ENCODE measurements at regions of chr17 and their contacts with region 1.

Region 1: DNA sequence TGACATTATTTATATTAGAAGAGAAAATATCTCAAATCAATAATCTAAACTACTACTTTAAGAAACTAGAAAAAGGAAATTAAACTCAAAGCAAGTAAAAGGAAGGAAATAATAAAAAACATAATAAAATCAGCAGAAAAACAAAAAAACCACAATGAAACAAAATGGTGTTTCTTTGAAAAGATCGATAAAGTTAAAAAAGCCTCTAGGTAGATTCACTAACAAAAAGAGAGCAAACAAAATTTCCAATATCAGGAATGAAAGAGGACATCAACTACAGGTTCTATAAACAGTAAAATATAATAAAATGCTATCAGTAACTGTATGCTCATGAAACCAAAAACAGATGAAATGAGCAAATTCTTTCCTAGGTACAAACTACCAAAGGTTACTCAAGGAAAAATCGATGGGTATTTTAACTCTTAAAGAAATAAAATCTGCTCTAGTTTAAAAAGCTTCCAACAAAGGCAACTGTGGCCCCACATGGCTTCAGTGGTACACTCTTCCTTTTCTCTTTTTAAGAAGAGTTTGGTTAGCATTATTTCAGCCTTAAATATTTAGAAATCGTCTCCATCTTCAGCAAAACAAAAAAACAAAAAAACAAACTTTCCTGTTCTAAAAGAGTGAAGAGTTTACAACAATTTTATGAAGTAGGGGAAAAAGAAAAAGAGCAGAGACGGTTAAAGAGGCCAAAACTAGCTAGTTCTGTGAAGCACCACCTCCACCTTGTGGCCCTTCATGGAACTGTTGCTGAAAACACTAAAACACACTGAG is 102.2 kb downstream of the TRIM37 start:
- DNase-seq: peak; percentile 17 to 73 (median 60)
- ATAC-seq: peak; percentile 73
- H3K4me3 ChIP-seq: no peak overlapping the region
- H3K4me3 Mint-ChIP-seq: peak overlapping the region in 2 of 10 donors; percentile 9 to 12
- H3K27ac ChIP-seq: no peak overlapping the region
- H3K27ac Mint-ChIP-seq: peak overlapping the region; percentile 50 to 86 (median 84)
- H3K4me1 ChIP-seq: peaks cover 5 to 6% of the 10 kb centered on the region in 2 donors
- H3K4me1 Mint-ChIP-seq: peaks cover 5 to 32% (median 20%) of the 10 kb centered on the region in 7 donors
- H3K27me3 ChIP-seq: no peaks in the 10 kb centered on the region
- H3K27me3 Mint-ChIP-seq: no peaks in the 10 kb centered on the region

Region 2: DNA sequence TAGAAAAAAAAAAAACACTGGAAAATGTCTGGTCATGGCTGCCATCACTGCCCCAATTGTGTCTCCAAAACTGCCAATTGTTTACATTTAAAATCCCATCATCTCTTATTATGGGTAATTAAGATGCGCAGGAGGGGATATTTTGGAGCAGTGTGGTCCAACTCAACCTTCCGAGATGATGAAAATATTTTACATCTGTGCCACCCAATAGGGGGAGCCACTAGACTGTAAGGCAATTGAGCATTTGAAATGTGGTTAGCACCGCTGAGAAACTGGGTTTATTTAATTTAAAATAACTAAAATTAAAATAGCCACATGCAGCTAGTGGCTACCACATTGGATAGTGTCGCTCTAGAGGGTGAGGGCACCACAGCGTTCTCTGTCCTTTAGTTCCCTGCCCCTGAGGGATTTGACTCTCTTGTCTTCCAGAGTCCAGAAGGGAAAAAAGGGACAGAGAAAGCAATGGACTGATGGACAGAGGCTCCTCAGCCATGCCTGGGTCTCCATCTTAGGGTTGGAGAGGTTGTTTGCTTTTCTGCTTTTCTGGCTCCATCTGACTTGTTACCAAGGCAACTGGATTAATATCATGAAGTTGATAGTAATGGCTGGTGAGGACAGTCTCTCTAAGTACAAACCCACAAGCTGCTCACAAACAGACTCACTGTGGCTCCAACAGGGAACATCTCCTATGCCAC is 727.3 kb before region 1 on chr17:
- CTCF ChIA-PET with region 1: no interaction called
- POLR2A ChIA-PET with region 1: no interaction called
- intact Hi-C with region 1: loop called in 1 of 2 experiments (anchors 1 kb)
- DNase-seq: peak in 2 of 9 donors; percentile 7 to 22
- ATAC-seq: no peak
- H3K4me3 ChIP-seq: no peak overlapping the region
- H3K4me3 Mint-ChIP-seq: no peak overlapping the region
- H3K27ac ChIP-seq: no peak overlapping the region
- H3K27ac Mint-ChIP-seq: no peak overlapping the region
- H3K4me1 ChIP-seq: no peaks in the 10 kb centered on the region
- H3K4me1 Mint-ChIP-seq: peaks cover 0 to 11% (median 5%) of the 10 kb centered on the region in 7 donors
- H3K27me3 ChIP-seq: no peaks in the 10 kb centered on the region
- H3K27me3 Mint-ChIP-seq: peaks cover 0 to 29% (median 21%) of the 10 kb centered on the region in 5 donors

Region 3: GRCh38 chr17:58317421-58318064 is 687.0 kb before region 1 on chr17:
- CTCF ChIA-PET with region 1: interaction called, 11 read pairs
- POLR2A ChIA-PET with region 1: no interaction called
- intact Hi-C with region 1: no loop called
- DNase-seq: peak; percentile 44 to 83 (median 77)
- ATAC-seq: peak; percentile 95
- H3K4me3 ChIP-seq: no peak overlapping the region
- H3K4me3 Mint-ChIP-seq: peak overlapping the region in 4 of 10 donors; percentile 4 to 58 (median 28)
- H3K27ac ChIP-seq: peak overlapping the region; percentile 47
- H3K27ac Mint-ChIP-seq: peak overlapping the region; percentile 58 to 94 (median 84)
- H3K4me1 ChIP-seq: peaks cover 11 to 12% of the 10 kb centered on the region in 2 donors
- H3K4me1 Mint-ChIP-seq: peaks cover 10 to 26% (median 13%) of the 10 kb centered on the region in 7 donors
- H3K27me3 ChIP-seq: no peaks in the 10 kb centered on the region
- H3K27me3 Mint-ChIP-seq: no peaks in the 10 kb centered on the region

Region 4: DNA sequence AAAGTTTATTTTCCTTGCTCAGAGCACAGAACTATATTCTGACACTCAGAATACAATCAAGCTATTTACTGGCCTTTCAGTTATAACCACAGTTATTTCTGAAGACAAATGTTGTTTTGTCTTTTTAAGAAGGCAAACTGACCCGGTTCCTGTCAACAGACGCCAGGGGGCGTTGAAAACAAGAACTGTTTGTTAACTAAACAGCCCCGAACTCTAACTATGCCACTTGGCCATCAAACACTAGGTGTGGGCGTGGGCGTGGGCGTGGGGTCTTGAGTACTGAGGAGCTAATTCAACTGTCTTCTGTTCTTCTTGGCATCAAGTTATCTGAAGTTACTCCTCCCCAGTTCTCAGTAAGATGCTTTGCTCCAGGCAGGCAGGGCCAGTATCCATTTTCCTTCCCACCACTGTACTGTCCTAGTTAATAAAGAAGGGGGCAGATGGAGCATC is 426.9 kb before region 1 on chr17:
- CTCF ChIA-PET with region 1: interaction called, 6 read pairs
- POLR2A ChIA-PET with region 1: no interaction called
- intact Hi-C with region 1: loop called (anchors 1 to 2 kb)
- DNase-seq: peak in 8 of 9 donors; percentile 4 to 39 (median 18)
- ATAC-seq: no peak
- H3K4me3 ChIP-seq: no peak overlapping the region
- H3K4me3 Mint-ChIP-seq: no peak overlapping the region
- H3K27ac ChIP-seq: no peak overlapping the region
- H3K27ac Mint-ChIP-seq: no peak overlapping the region
- H3K4me1 ChIP-seq: no peaks in the 10 kb centered on the region
- H3K4me1 Mint-ChIP-seq: peaks cover 0 to 10% (median 0%) of the 10 kb centered on the region in 7 donors
- H3K27me3 ChIP-seq: no peaks in the 10 kb centered on the region
- H3K27me3 Mint-ChIP-seq: peaks cover 0 to 8% (median 0%) of the 10 kb centered on the region in 5 donors

Region 5: DNA sequence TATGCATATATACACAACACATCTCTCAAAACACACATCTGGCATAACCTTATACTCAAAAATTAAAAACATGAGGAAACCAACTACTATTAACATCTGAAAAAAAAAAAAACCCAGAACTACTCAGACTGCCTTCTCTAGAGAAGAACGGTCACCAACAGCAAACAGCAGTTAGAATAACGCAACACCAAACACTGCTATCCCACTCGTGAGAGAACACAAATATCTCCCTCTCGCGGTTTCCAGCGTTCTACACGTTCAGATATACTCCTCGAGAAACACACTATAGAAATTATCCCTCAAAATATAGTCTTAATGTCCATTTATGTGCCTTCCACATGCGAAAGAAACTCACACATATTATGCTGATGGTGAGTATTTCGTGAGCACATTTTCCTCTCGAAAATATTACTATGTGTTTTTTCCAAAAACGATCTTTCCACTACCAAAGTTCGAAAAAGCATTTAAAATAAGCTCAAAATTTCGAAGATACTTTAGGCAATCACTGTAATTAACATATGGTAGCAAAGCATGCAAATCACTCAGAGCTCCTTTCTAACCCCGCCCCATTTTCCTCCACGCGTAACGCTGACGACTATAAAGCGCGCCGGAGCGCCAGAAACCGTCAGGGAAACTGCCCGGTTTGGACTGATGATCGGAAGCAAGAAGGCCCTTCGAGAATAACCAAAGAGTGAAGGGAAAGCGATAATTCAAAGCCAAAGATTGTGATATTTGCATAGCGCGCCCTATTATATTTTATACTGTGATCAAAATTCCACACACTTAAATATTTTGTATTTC is 372.8 kb before region 1 on chr17:
- CTCF ChIA-PET with region 1: interaction called, 3 read pairs
- POLR2A ChIA-PET with region 1: interaction called, 4 read pairs
- intact Hi-C with region 1: loop called (anchors 1 kb)
- DNase-seq: peak; percentile 74 to 95 (median 92)
- ATAC-seq: peak; percentile 90
- H3K4me3 ChIP-seq: peak overlapping the region; percentile 46
- H3K4me3 Mint-ChIP-seq: no peak overlapping the region
- H3K27ac ChIP-seq: peak overlapping the region; percentile 78
- H3K27ac Mint-ChIP-seq: no peak overlapping the region
- H3K4me1 ChIP-seq: peaks cover 6 to 12% of the 10 kb centered on the region in 2 donors
- H3K4me1 Mint-ChIP-seq: peaks cover 0 to 9% (median 5%) of the 10 kb centered on the region in 7 donors
- H3K27me3 ChIP-seq: no peaks in the 10 kb centered on the region
- H3K27me3 Mint-ChIP-seq: peaks cover 0 to 2% (median 0%) of the 10 kb centered on the region in 5 donors

Region 6: GRCh38 chr17:58710936-58711775 is 293.4 kb before region 1 on chr17:
- CTCF ChIA-PET with region 1: interaction called, 23 read pairs
- POLR2A ChIA-PET with region 1: interaction called, 6 read pairs
- intact Hi-C with region 1: loop called (anchors 1 kb)
- DNase-seq: peak in 7 of 9 donors; percentile 12 to 37 (median 32)
- ATAC-seq: no peak
- H3K4me3 ChIP-seq: no peak overlapping the region
- H3K4me3 Mint-ChIP-seq: no peak overlapping the region
- H3K27ac ChIP-seq: no peak overlapping the region
- H3K27ac Mint-ChIP-seq: peak overlapping the region in 1 of 9 donors; percentile 42
- H3K4me1 ChIP-seq: no peaks in the 10 kb centered on the region
- H3K4me1 Mint-ChIP-seq: peaks cover 0 to 12% (median 4%) of the 10 kb centered on the region in 7 donors
- H3K27me3 ChIP-seq: no peaks in the 10 kb centered on the region
- H3K27me3 Mint-ChIP-seq: no peaks in the 10 kb centered on the region

Measured in naive thymus-derived CD4-positive, alpha-beta T cell (primary cell).